ENCODE measurements at regions of chr6 and their contacts with region 1.

Region 1: GRCh38 chr6:135506270-135506997 is 8.9 kb upstream of the AHI1 start:
- DNase-seq: peak; percentile 73
- H3K4me3 ChIP-seq: no peak overlapping the region
- H3K27ac ChIP-seq: no peak overlapping the region
- H3K4me1 ChIP-seq: no peaks in the 10 kb centered on the region
- H3K27me3 ChIP-seq: no peaks in the 10 kb centered on the region

Region 2: GRCh38 chr6:134707342-134708031 is 798.9 kb before region 1 on chr6:
- in situ Hi-C with region 1: no loop called
- DNase-seq: peak; percentile 40
- H3K4me3 ChIP-seq: no peak overlapping the region
- H3K27ac ChIP-seq: no peak overlapping the region
- H3K4me1 ChIP-seq: peaks cover 8% of the 10 kb centered on the region; the same call in 1 of the 2 replicates
- H3K27me3 ChIP-seq: no peaks in the 10 kb centered on the region

Region 3: GRCh38 chr6:135149376-135149775 is 357.1 kb before region 1 on chr6:
- in situ Hi-C with region 1: no loop called
- DNase-seq: no peak
- H3K4me3 ChIP-seq: no peak overlapping the region
- H3K27ac ChIP-seq: no peak overlapping the region
- H3K4me1 ChIP-seq: peaks cover 10% of the 10 kb centered on the region; the same call in 1 of the 2 replicates
- H3K27me3 ChIP-seq: no peaks in the 10 kb centered on the region

Region 4: GRCh38 chr6:136526196-136526930 is 1019.9 kb after region 1 on chr6:
- in situ Hi-C with region 1: loop called (anchors 25 kb)
- DNase-seq: peak; percentile 83
- H3K4me3 ChIP-seq: no peak overlapping the region
- H3K27ac ChIP-seq: no peak overlapping the region
- H3K4me1 ChIP-seq: peaks cover 14% of the 10 kb centered on the region; the same call in 1 of the 2 replicates
- H3K27me3 ChIP-seq: no peaks in the 10 kb centered on the region